CD8-positive, alpha-beta T cell (primary cell): ENCODE measurements at regions of chr21 and their contacts with region 1.

Region 1: DNA sequence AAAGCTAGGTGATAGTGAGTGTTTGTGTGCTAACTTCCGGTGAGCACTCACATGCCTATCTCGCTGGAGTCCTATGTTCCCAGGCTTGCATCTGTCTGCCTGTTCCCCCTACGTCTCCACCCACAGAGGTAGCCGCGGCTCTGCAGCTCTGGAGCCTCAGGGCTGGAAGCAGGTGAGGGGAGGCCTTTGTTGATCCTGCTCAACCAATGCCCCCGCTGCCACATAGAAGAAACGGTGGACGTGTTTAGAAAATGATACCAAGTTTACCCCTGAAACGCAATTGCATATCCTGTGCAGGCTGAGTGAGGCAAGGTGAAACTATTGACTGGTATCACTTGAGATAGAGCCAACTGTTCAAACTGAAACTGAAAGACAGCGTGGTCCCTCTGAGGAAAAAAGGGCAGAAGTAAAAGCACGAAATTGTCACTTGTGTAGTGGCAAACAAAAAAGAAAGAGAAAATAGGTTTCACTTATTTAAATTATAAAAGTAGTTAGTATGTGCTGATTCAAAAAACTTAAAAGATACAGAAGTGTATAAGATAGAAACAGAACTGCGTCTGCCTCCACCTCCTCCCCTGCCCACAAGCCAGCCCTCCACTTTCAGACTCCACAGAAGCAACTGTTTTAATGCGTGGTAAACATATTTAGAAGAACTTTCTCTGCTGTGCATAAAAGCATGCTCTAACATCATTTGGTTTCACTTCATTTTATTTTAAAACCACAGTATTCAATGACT is 38.6 kb upstream of the ETS2 start:
- DNase-seq: peak; percentile 13 to 88 (median 46)
- ATAC-seq: peak; percentile 85
- H3K4me3 ChIP-seq: peak overlapping the region; percentile 54 to 55
- H3K4me3 Mint-ChIP-seq: peak overlapping the region; percentile 82
- H3K27ac ChIP-seq: peak overlapping the region; percentile 69 to 82
- H3K27ac Mint-ChIP-seq: peak overlapping the region; percentile 96
- H3K4me1 ChIP-seq: peaks cover 21% of the 10 kb centered on the region
- H3K4me1 Mint-ChIP-seq: peaks cover 32% of the 10 kb centered on the region
- H3K27me3 ChIP-seq: no peaks in the 10 kb centered on the region
- H3K27me3 Mint-ChIP-seq: no peaks in the 10 kb centered on the region
- CTCF ChIP-seq: no peak

Region 2: GRCh38 chr21:38805328-38806152 is 38.4 kb after region 1 on chr21 and contains the start of gene ETS2:
- CTCF ChIA-PET with region 1: interaction called, 3 read pairs
- POLR2A ChIA-PET with region 1: interaction called, 7 read pairs
- intact Hi-C with region 1: loop called (anchors 1 to 2 kb)
- DNase-seq: peak; percentile 33 to 84 (median 63)
- ATAC-seq: peak; percentile 83
- H3K4me3 ChIP-seq: peak within 1 kb of the TSS; percentile 74 to 79
- H3K4me3 Mint-ChIP-seq: peak within 1 kb of the TSS; percentile 84
- H3K27ac ChIP-seq: peak within 1 kb of the TSS; percentile 51 to 59
- H3K27ac Mint-ChIP-seq: peak within 1 kb of the TSS; percentile 73
- H3K4me1 ChIP-seq: peaks cover 8% of the 10 kb centered on the region
- H3K4me1 Mint-ChIP-seq: peaks cover 31% of the 10 kb centered on the region
- H3K27me3 ChIP-seq: no peaks in the 10 kb centered on the region
- H3K27me3 Mint-ChIP-seq: peaks cover 2% of the 10 kb centered on the region
- CTCF ChIP-seq: no peak
- total RNA-seq, gene ETS2: 8.1 to 10.0 TPM

Region 3: GRCh38 chr21:38914283-38915012 is 147.3 kb after region 1 on chr21:
- CTCF ChIA-PET with region 1: no interaction called
- POLR2A ChIA-PET with region 1: no interaction called
- intact Hi-C with region 1: no loop called
- DNase-seq: no peak
- ATAC-seq: no peak
- H3K4me3 ChIP-seq: no peak overlapping the region
- H3K4me3 Mint-ChIP-seq: no peak overlapping the region
- H3K27ac ChIP-seq: no peak overlapping the region
- H3K27ac Mint-ChIP-seq: no peak overlapping the region
- H3K4me1 ChIP-seq: no peaks in the 10 kb centered on the region
- H3K4me1 Mint-ChIP-seq: no peaks in the 10 kb centered on the region
- H3K27me3 ChIP-seq: peaks cover 0 to 4% of the 10 kb centered on the region in 2 experiments
- H3K27me3 Mint-ChIP-seq: peaks cover 8% of the 10 kb centered on the region
- CTCF ChIP-seq: no peak